A549 (cell line): ENCODE measurements at regions of chr17 and their contacts with region 1.

Region 1: GRCh38 chr17:41801374-41802271 is 10.1 kb downstream of the P3H4 start:
- DNase-seq: peak; percentile 86 to 88
- ATAC-seq: peak; percentile 80 to 86
- H3K4me3 ChIP-seq: no peak overlapping the region
- H3K27ac ChIP-seq: peak overlapping the region; percentile 80 to 86
- H3K4me1 ChIP-seq: peaks cover 23% of the 10 kb centered on the region
- CTCF ChIP-seq: peak; percentile 98
- EP300 ChIP-seq: peak in 1 of 2 experiments; percentile 23; a peak in 1 of 5 replicates
- POLR2A ChIP-seq: no peak
- RAD21 ChIP-seq: peak; percentile 99

Region 2: GRCh38 chr17:41777574-41778188 is 23.9 kb before region 1 on chr17:
- CTCF ChIA-PET with region 1: interaction called, 3,262 read pairs
- POLR2A ChIA-PET with region 1: interaction called, 26 read pairs
- DNase-seq: peak; percentile 93 to 98
- ATAC-seq: peak; percentile 81
- H3K4me3 ChIP-seq: peak overlapping the region; percentile 8; the same call in 1 of the 3 replicates
- H3K27ac ChIP-seq: peak overlapping the region; percentile 89 to 93
- H3K4me1 ChIP-seq: peaks cover 90% of the 10 kb centered on the region
- CTCF ChIP-seq: no peak
- EP300 ChIP-seq: peak; percentile 86 to 90; a peak in 4 of 5 replicates
- POLR2A ChIP-seq: peak; percentile 25; the same call in 1 of the 2 replicates
- RAD21 ChIP-seq: no peak; a peak in 1 of 5 replicates

Region 3: DNA sequence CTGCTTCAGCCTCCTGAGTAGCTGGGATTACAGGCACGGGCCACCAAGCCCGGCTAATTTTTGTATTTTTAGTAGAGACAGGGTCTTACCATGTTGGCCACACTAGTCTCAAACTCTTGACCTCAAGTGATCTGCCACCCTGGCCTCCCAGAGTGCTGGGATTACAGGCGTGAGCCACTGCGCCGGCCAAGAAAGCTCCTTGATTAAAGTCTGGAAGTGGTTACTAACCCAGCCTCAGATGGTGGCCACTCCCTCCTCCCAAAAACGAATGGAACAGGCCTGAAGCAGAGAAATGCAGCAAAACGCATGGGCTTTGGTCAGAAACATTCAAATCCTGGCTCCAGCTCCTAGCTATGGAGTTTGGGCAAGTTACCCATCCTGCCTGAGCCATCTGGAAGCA is 22.5 kb after region 1 on chr17:
- CTCF ChIA-PET with region 1: interaction called, 22 read pairs
- POLR2A ChIA-PET with region 1: no interaction called
- DNase-seq: no peak
- ATAC-seq: no peak; a peak in 1 of 6 replicates
- H3K4me3 ChIP-seq: no peak overlapping the region
- H3K27ac ChIP-seq: no peak overlapping the region
- H3K4me1 ChIP-seq: no peaks in the 10 kb centered on the region
- CTCF ChIP-seq: no peak
- EP300 ChIP-seq: no peak
- POLR2A ChIP-seq: no peak
- RAD21 ChIP-seq: no peak

Region 4: GRCh38 chr17:41848788-41849187 is 47.2 kb after region 1 on chr17:
- CTCF ChIA-PET with region 1: interaction called, 25 read pairs
- POLR2A ChIA-PET with region 1: interaction called, 6 read pairs
- DNase-seq: no peak
- ATAC-seq: no peak
- H3K4me3 ChIP-seq: no peak overlapping the region
- H3K27ac ChIP-seq: no peak overlapping the region
- H3K4me1 ChIP-seq: peaks cover 12% of the 10 kb centered on the region; the same call in 2 of the 3 replicates
- CTCF ChIP-seq: no peak
- EP300 ChIP-seq: no peak
- POLR2A ChIP-seq: no peak
- RAD21 ChIP-seq: no peak

Region 5: DNA sequence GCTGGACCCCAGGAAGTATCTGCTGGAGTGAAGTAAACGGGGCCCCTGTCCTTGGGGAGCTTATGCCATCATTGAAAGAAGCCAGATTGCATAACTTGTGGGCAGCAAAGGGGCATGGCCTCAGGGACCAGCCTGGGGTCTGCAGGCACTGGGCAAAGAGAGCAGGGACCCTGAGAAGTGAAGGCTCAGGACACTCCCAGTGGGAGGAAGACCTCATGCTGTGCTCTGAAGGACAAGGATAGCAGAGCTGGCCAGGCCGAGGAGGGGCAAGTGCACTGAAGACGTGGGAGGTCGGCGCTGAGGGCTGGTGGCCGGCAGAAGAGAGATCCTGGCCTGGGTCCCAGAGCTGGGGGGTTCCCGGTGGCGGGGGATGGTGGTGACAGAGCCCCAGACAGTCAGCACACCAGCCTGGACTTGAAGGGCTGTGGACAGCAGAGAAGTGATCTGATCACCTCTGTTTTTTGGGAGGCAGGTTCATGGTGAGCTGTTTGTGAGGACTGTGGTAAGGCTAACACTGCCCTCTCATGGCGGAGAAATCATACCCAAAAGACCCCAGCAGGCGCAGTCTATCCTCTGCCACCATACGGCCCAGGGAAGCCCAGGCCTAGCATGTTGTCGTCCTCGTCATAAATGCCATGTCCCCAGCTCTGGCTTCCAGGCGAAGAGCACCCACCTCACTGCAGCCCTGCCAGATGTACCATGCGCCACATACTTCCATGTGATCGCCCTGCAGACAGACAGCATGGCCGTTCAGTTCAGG is 157.9 kb after region 1 on chr17:
- CTCF ChIA-PET with region 1: interaction called, 17 read pairs
- POLR2A ChIA-PET with region 1: no interaction called
- DNase-seq: peak; percentile 76 to 82
- ATAC-seq: peak; percentile 79 to 89
- H3K4me3 ChIP-seq: no peak overlapping the region
- H3K27ac ChIP-seq: peak overlapping the region in 1 of 2 experiments; percentile 72; a peak in 3 of 6 replicates
- H3K4me1 ChIP-seq: peaks cover 7% of the 10 kb centered on the region; the same call in 2 of the 3 replicates
- CTCF ChIP-seq: peak; percentile 84
- EP300 ChIP-seq: no peak
- POLR2A ChIP-seq: no peak
- RAD21 ChIP-seq: peak; percentile 88 to 94

Region 6: GRCh38 chr17:42027961-42028790 is 226.6 kb after region 1 on chr17:
- CTCF ChIA-PET with region 1: no interaction called
- POLR2A ChIA-PET with region 1: no interaction called
- DNase-seq: peak; percentile 70 to 71
- ATAC-seq: peak; percentile 58 to 74
- H3K4me3 ChIP-seq: no peak overlapping the region
- H3K27ac ChIP-seq: no peak overlapping the region
- H3K4me1 ChIP-seq: peaks cover 22% of the 10 kb centered on the region
- CTCF ChIP-seq: peak; percentile 43; the same call in 2 of the 3 replicates
- EP300 ChIP-seq: no peak
- POLR2A ChIP-seq: no peak
- RAD21 ChIP-seq: peak in 1 of 2 experiments; percentile 33; a peak in 2 of 5 replicates